ENCODE measurements at regions of chr21 and their contacts with region 1.

Region 1: DNA sequence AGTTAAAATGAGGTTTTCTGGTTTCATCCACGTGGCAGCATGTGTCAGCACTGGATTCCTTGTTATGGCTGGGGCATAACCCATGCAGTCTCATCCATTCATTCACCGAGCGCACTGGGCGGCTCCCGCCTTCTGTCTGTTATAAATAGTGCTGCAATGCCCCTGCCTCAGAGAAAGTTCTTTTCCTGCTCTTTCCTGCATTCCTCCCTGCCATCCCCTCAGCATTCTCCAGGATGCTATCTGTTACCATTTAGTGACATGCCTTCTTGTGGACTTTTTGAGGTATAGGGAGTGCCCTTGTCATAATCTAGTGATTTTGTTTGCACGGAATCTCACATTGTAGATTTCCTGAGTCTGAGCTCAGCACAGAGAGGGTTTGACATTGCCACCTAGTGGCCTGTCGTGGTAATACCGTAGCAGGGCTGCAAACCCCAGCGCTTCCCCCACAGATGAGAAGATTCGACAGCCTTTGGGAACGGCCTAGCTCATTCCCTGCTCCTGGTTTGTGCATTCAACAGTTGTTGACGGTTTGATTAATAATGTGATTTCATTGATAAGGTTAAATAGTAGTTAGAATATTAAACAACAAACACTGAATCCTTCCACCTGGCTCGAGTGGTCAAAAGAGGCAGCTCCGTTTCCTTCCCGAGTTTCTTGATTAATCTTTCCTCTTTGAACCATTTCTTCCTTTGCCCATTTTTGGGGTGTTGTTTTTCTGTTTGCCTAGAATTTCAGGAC is 46.3 kb downstream of the UMODL1 start:
- DNase-seq: peak; percentile 81
- ATAC-seq: peak; percentile 96
- H3K4me3 ChIP-seq: no peak overlapping the region; the same call in 1 of the 2 replicates
- H3K27ac ChIP-seq: no peak overlapping the region
- H3K4me1 ChIP-seq: peaks cover 7% of the 10 kb centered on the region; the same call in 1 of the 2 replicates
- H3K27me3 ChIP-seq: peaks cover 31% of the 10 kb centered on the region; the same call in 1 of the 2 replicates
- CTCF ChIP-seq: peak; percentile 93
- POLR2A ChIP-seq: no peak
- RAD21 ChIP-seq: peak; percentile 93

Region 2: DNA sequence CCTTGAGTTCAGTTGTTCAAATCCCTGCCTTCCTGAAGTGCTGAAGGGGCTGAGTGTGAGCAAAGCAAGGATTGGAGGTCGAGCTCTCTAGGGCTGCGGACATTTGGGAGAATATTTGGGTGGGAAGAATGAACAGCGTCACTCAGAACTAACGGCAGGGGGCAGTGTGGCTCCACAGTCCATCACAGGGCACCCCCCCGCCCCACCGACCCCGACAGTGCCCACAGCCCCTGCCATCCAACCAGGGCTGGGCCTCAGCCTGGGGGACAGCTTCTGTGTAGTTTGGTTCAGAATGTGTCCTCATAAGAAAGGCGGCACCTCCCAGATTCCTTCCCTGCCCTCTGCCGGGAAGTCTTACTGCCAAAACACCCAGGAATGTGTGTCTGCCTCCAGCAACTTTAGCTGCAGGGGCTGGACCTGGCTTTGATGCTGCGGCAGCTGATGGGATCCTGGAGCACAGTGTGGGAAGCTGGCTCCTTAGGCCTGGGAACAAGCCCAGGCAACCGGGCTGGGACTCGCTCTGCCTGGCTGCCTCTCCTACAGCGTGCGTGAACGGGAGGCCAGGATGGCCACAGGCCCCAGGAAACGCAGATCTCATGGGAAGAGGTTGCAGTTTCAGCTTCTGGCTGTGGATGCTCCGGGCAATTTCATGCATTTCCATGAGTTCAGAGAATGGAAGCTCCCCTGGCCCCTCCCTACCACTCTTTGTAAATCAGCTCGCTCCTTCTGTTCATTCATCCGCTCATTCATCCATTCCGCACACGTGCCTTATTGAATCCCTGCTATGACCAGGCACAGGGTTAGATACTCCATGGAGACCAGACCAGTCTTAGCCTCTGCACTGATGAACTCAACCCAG is 504.5 kb before region 1 on chr21:
- CTCF ChIA-PET with region 1: interaction called, 4 read pairs
- POLR2A ChIA-PET with region 1: no interaction called
- dilution Hi-C with region 1: no loop called
- in situ Hi-C with region 1: loop called (anchors 10 kb)
- intact Hi-C with region 1: loop called (anchors 1 kb)
- DNase-seq: peak; percentile 90
- ATAC-seq: peak; percentile 66
- H3K4me3 ChIP-seq: no peak overlapping the region
- H3K27ac ChIP-seq: peak overlapping the region; percentile 6; the same call in 1 of the 2 replicates
- H3K4me1 ChIP-seq: peaks cover 19% of the 10 kb centered on the region
- H3K27me3 ChIP-seq: peaks cover 7% of the 10 kb centered on the region
- CTCF ChIP-seq: peak; percentile 73
- POLR2A ChIP-seq: no peak
- RAD21 ChIP-seq: peak; percentile 75

Region 3: GRCh38 chr21:41835711-41836154 is 281.7 kb before region 1 on chr21:
- CTCF ChIA-PET with region 1: no interaction called
- POLR2A ChIA-PET with region 1: no interaction called
- dilution Hi-C with region 1: no loop called
- in situ Hi-C with region 1: no loop called
- intact Hi-C with region 1: loop called (anchors 5 kb)
- DNase-seq: no peak
- ATAC-seq: no peak
- H3K4me3 ChIP-seq: no peak overlapping the region
- H3K27ac ChIP-seq: no peak overlapping the region
- H3K4me1 ChIP-seq: no peaks in the 10 kb centered on the region
- H3K27me3 ChIP-seq: no peaks in the 10 kb centered on the region
- CTCF ChIP-seq: no peak
- POLR2A ChIP-seq: no peak
- RAD21 ChIP-seq: no peak

Region 4: GRCh38 chr21:41933313-41934086 is 183.9 kb before region 1 on chr21:
- CTCF ChIA-PET with region 1: interaction called, 6 read pairs
- POLR2A ChIA-PET with region 1: no interaction called
- dilution Hi-C with region 1: no loop called
- in situ Hi-C with region 1: no loop called
- intact Hi-C with region 1: loop called (anchors 1 kb)
- DNase-seq: peak; percentile 56
- ATAC-seq: peak; percentile 22
- H3K4me3 ChIP-seq: peak overlapping the region; percentile 19
- H3K27ac ChIP-seq: peak overlapping the region; percentile 69
- H3K4me1 ChIP-seq: peaks cover 19% of the 10 kb centered on the region
- H3K27me3 ChIP-seq: no peaks in the 10 kb centered on the region
- CTCF ChIP-seq: peak; percentile 54
- POLR2A ChIP-seq: no peak
- RAD21 ChIP-seq: peak; percentile 47

Region 5: GRCh38 chr21:41953831-41954653 is 163.4 kb before region 1 on chr21 and contains the start of gene C2CD2:
- CTCF ChIA-PET with region 1: interaction called, 4 read pairs
- POLR2A ChIA-PET with region 1: no interaction called
- dilution Hi-C with region 1: no loop called
- in situ Hi-C with region 1: loop called (anchors 5 kb)
- intact Hi-C with region 1: loop called (anchors 5 kb)
- DNase-seq: peak; percentile 73
- ATAC-seq: peak; percentile 89
- H3K4me3 ChIP-seq: peak within 1 kb of the TSS; percentile 92
- H3K27ac ChIP-seq: peak within 1 kb of the TSS; percentile 63; the same call in 1 of the 2 replicates
- H3K4me1 ChIP-seq: peaks cover 26% of the 10 kb centered on the region
- H3K27me3 ChIP-seq: no peaks in the 10 kb centered on the region
- CTCF ChIP-seq: no peak
- POLR2A ChIP-seq: peak; percentile 83
- RAD21 ChIP-seq: no peak
- total RNA-seq, gene C2CD2: 19.4 and 25.3 TPM in 2 replicates